ENCODE measurements at regions of chr11 and their contacts with region 1.

Region 1: DNA sequence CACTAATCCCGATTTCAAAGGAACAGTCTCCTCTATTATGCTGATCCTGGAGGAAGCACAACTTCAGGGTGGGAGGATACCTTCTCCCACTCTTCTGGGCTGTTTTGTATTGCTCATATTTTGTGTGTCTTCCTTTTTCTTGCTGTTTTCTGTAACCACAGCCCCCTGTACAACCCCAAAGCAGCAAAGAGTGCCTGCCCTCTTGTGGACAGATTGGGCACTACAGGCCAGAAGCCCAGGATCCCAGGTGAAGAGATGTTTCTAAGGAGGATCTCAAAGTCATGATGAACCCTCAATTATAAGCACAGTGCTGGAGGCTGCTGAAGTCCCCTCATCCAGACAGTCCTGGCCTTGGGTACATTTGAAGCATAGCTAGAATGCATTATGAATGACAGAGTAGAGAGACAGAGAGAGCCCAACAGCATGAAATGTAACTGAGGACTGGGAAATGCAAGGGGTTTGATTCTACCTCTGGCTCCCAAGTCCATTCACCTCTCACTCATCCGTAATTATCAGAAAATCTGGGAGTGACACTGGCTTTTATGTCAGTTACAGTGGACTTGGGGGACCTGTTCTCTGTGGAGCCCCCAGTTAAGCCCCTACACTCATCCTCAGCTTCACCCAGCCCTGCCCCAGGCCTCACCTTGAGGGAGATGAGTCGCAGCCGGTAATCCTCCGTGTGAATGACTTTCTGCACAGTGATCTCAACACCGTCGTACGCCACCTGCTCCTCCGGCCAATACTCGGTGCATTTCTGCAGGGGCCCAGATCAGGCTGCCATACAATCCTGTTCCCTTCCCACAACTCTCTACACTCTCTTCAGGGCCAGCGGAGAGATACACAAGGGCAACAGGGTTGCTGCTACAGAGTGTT is 6.2 kb upstream of the IGSF22 start:
- DNase-seq: peak; percentile 77
- ATAC-seq: peak; percentile 46
- H3K4me3 Mint-ChIP-seq: no peak overlapping the region
- H3K27ac Mint-ChIP-seq: no peak overlapping the region
- H3K4me1 Mint-ChIP-seq: peaks cover 11% of the 10 kb centered on the region
- H3K27me3 Mint-ChIP-seq: no peaks in the 10 kb centered on the region
- CTCF ChIP-seq: peak; percentile 98

Region 2: DNA sequence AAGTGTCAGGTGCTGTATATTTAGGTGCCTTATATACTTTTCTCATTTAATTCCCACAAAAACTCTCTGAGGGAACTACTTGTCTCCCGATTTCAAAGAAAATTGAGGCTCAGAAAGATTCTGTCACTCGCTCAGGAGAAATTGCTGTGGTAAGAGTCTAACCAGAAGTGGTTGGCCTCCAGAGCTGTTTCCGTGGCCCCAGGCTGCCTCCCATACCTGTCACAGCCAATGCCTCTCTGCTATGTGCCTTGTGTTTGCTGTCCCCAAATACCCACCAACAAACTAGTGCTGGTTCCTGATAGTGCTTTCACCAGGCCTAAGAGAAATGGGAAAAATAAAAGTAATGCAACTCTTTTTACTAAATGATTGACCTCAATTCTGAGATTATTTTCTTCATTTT is 54.6 kb before region 1 on chr11:
- CTCF ChIA-PET with region 1: no interaction called
- POLR2A ChIA-PET with region 1: no interaction called
- DNase-seq: no peak
- ATAC-seq: no peak
- H3K4me3 Mint-ChIP-seq: no peak overlapping the region
- H3K27ac Mint-ChIP-seq: no peak overlapping the region
- H3K4me1 Mint-ChIP-seq: no peaks in the 10 kb centered on the region
- H3K27me3 Mint-ChIP-seq: no peaks in the 10 kb centered on the region
- CTCF ChIP-seq: no peak

Region 3: DNA sequence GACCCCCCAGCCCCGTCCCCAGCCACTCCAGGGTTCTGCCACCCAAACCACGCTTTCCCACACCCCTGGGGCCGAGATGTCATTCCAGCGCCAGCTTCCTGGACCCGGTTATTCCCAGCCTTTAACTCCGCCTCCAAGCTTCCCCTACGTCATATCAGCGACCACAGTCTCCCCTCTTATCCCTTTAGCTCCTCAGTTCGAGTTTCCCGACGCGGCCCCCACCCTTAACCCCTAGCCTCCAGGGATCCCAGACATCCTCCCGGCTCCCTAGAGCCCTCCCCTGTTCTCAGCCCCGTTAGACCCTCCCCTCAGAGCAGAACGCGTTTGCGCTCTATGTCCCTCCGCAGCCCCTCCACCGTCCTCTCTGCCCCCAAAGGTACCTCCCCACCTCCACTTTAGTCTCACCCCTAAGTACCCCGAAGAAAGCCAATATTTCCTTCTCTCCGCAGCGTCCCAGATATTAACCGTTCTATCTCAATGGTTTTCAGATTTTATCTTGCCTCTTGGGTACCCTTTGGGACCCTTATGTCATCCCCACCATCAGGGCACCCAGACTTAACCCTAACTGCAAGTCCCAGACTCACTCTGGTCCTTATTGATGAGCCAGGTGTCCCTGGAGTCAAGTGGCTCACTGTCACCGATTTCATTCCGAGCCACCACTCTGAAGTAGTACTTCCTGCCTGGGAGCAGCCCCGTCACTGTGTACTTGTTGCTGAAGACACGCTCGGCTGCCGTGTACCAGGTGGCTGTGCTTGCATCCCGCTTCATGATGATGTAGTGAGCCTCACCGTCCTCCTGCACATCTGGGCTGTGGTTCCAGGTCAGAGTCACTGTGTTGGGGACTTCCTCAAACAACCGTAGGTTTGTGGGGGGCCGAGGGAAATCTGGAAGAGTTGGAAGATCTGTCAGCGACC is 25.6 kb before region 1 on chr11:
- CTCF ChIA-PET with region 1: interaction called, 14 read pairs
- POLR2A ChIA-PET with region 1: no interaction called
- DNase-seq: peak; percentile 69
- ATAC-seq: peak; percentile 81
- H3K4me3 Mint-ChIP-seq: peak overlapping the region; percentile 79
- H3K27ac Mint-ChIP-seq: no peak overlapping the region
- H3K4me1 Mint-ChIP-seq: peaks cover 13% of the 10 kb centered on the region
- H3K27me3 Mint-ChIP-seq: peaks cover 67% of the 10 kb centered on the region
- CTCF ChIP-seq: no peak